ENCODE measurements at regions of chr4 and their contacts with region 1.

Region 1: DNA sequence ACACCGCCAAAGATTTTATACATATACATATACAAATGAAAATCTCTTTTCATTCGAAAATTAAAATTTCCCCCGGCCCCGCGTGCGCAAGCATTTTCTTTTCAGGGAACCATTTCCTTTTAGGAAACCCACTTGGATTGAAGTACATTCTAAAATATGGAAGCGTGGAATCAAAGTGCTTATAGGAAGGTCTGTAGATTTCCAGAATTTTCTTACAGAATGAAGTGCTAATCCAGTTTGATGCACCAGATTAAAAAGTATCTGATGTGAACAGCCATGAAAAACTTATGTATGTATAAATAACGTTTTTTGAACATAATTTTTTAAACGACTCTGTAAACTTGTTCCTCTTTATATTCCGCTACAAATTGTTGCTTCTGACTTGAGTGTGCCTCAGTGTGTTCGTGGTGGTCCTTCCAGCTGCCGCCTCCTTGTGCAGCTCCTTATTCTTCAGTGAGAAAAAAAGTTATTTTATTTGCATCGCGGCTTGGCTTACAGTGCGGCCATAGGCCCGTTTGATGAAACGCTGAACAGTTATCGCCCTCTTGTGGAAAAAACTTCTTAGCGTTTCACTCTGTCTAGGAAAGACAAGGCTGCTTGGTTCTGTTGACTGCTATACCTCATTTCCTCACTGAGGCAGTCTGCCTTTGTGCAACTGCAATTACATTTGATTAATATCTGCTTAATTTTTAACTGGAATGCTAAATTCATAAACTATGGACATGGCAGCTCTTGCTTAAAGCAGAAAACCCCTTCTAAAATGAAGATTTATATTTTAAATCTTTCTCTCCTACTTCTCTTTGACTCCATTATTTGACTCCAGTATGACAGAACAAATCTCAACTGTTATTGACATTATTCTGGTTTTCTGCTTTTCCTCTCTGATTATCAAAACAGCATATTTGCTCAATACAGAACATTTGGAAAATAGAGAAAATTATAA is 4.7 kb upstream of the NKX6-1 start:
- DNase-seq: no peak

Region 2: DNA sequence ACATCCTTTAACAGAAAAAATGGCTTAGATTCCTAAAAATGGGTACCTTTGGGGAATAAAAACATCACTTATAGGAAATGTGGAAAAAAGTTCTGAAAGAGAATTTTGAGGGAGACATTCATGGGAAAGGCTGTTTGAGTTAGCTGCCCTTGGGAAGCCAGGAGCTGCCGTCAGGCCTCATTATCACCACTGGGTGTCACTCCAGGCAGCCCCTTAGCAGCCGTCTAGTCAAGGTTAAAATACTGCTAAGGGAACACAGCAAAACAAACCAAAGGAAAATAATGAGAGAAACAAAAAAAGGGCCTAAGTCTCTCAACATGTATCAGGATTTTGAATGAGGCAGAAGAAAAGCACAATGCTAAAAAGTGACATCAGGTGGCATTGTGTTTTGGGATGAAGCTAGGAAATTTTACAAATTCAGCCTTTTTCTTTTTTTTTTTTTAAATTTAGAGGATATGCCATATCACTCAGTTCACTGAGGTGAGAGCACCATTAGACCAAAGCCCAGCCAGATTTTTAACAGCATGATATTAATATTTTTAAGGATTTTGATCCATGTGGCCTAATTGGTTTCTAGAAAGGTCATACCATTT is 732.6 kb before region 1 on chr4:
- intact Hi-C with region 1: loop called (anchors 5 kb)
- DNase-seq: no peak

Region 3: GRCh38 chr4:84342161-84342560 is 161.6 kb before region 1 on chr4:
- intact Hi-C with region 1: no loop called
- DNase-seq: no peak

Region 4: GRCh38 chr4:84433633-84434222 is 70.0 kb before region 1 on chr4:
- intact Hi-C with region 1: no loop called
- DNase-seq: no peak